ENCODE measurements at regions of chr15 and their contacts with region 1.

Region 1: GRCh38 chr15:43133430-43134156 is at the start of gene TMEM62:
- DNase-seq: peak; percentile 75
- ATAC-seq: peak; percentile 97
- H3K4me3 ChIP-seq: peak within 1 kb of the TSS; percentile 88
- H3K27ac ChIP-seq: peak within 1 kb of the TSS; percentile 84
- H3K4me1 ChIP-seq: no peaks in the 10 kb centered on the region
- H3K27me3 ChIP-seq: no peaks in the 10 kb centered on the region
- CTCF ChIP-seq: no peak
- EP300 ChIP-seq: no peak; a peak in 1 of 4 replicates
- POLR2A ChIP-seq: peak; percentile 99
- RAD21 ChIP-seq: 0 out of 2 replicates have a peak, but pooled peaks have one; percentile 0
- polyA plus RNA-seq, gene TMEM62: 7.0 to 9.7 TPM

Region 2: GRCh38 chr15:42670451-42670850 is 463.1 kb before region 1 on chr15:
- CTCF ChIA-PET with region 1: no interaction called
- POLR2A ChIA-PET with region 1: no interaction called
- RAD21 ChIA-PET with region 1: no interaction called
- SMC1A ChIA-PET with region 1: no interaction called
- in situ Hi-C with region 1: no loop called
- intact Hi-C with region 1: no loop called
- DNase-seq: no peak
- ATAC-seq: no peak
- H3K4me3 ChIP-seq: no peak overlapping the region
- H3K27ac ChIP-seq: no peak overlapping the region
- H3K4me1 ChIP-seq: no peaks in the 10 kb centered on the region
- H3K27me3 ChIP-seq: no peaks in the 10 kb centered on the region
- CTCF ChIP-seq: no peak
- EP300 ChIP-seq: no peak
- POLR2A ChIP-seq: no peak
- RAD21 ChIP-seq: no peak

Region 3: GRCh38 chr15:42879443-42879842 is 254.2 kb before region 1 on chr15:
- CTCF ChIA-PET with region 1: no interaction called
- POLR2A ChIA-PET with region 1: no interaction called
- RAD21 ChIA-PET with region 1: no interaction called
- SMC1A ChIA-PET with region 1: no interaction called
- in situ Hi-C with region 1: no loop called
- intact Hi-C with region 1: no loop called
- DNase-seq: no peak
- ATAC-seq: no peak
- H3K4me3 ChIP-seq: no peak overlapping the region
- H3K27ac ChIP-seq: no peak overlapping the region
- H3K4me1 ChIP-seq: no peaks in the 10 kb centered on the region
- H3K27me3 ChIP-seq: no peaks in the 10 kb centered on the region
- CTCF ChIP-seq: no peak
- EP300 ChIP-seq: no peak
- POLR2A ChIP-seq: no peak
- RAD21 ChIP-seq: no peak

Region 4: GRCh38 chr15:43185157-43186017 is 51.8 kb after region 1 on chr15 and contains the start of gene CCNDBP1:
- CTCF ChIA-PET with region 1: no interaction called
- POLR2A ChIA-PET with region 1: interaction called, 3 read pairs
- RAD21 ChIA-PET with region 1: no interaction called
- SMC1A ChIA-PET with region 1: no interaction called
- in situ Hi-C with region 1: no loop called
- intact Hi-C with region 1: loop called (anchors 5 kb)
- DNase-seq: peak; percentile 87
- ATAC-seq: peak; percentile 98
- H3K4me3 ChIP-seq: peak within 1 kb of the TSS; percentile 100
- H3K27ac ChIP-seq: peak within 1 kb of the TSS; percentile 80
- H3K4me1 ChIP-seq: no peaks in the 10 kb centered on the region
- H3K27me3 ChIP-seq: no peaks in the 10 kb centered on the region
- CTCF ChIP-seq: peak; percentile 28 to 32 (median 28); a peak in 5 of 6 replicates
- EP300 ChIP-seq: no peak
- POLR2A ChIP-seq: peak; percentile 98
- RAD21 ChIP-seq: no peak
- polyA plus RNA-seq, gene CCNDBP1: 30.1 to 39.2 TPM

Region 5: DNA sequence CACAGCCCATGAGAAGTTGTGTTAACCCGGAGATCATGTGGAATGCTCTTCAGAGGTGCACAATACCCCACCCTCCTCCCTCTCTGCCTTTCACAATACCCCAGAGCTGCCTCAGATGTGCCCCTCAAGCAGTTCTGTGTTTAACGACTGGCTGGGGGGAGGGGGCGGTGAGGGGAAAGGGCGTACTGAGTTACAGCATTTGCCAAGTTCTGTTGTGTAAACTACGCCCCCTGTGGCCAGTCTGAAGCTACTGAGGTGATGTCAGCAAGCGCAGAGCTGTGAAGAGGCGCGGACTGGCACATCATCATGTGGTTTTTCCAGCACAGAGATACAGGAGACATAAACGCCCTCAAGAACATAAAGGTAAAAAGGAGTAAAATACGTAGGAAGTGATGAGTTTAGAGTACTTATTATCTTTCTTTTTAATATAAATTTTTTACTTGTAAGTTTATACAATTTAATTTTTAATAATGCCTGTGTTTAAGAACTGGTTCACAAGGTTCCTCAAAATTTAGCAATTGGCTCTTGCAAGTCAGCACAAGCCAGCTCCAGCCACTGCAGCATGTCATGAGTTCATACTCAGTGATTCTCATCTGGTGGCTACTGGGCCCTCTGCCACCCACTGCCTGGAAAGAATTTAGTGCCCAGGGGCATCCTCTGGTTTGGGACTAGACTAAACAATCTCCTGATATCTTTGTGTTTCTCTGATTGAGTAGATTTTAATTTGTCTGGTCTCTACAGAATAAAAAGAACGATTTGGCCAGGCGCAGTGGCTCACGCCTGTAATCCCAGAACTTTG is 85.5 kb after region 1 on chr15:
- CTCF ChIA-PET with region 1: no interaction called
- POLR2A ChIA-PET with region 1: no interaction called
- RAD21 ChIA-PET with region 1: no interaction called
- SMC1A ChIA-PET with region 1: no interaction called
- in situ Hi-C with region 1: no loop called
- intact Hi-C with region 1: no loop called
- DNase-seq: no peak
- ATAC-seq: no peak
- H3K4me3 ChIP-seq: no peak overlapping the region
- H3K27ac ChIP-seq: no peak overlapping the region
- H3K4me1 ChIP-seq: no peaks in the 10 kb centered on the region
- H3K27me3 ChIP-seq: no peaks in the 10 kb centered on the region
- CTCF ChIP-seq: peak in 2 of 3 experiments; percentile 1 to 20; a peak in 1 of 6 replicates
- EP300 ChIP-seq: no peak
- POLR2A ChIP-seq: no peak
- RAD21 ChIP-seq: no peak

Region 6: DNA sequence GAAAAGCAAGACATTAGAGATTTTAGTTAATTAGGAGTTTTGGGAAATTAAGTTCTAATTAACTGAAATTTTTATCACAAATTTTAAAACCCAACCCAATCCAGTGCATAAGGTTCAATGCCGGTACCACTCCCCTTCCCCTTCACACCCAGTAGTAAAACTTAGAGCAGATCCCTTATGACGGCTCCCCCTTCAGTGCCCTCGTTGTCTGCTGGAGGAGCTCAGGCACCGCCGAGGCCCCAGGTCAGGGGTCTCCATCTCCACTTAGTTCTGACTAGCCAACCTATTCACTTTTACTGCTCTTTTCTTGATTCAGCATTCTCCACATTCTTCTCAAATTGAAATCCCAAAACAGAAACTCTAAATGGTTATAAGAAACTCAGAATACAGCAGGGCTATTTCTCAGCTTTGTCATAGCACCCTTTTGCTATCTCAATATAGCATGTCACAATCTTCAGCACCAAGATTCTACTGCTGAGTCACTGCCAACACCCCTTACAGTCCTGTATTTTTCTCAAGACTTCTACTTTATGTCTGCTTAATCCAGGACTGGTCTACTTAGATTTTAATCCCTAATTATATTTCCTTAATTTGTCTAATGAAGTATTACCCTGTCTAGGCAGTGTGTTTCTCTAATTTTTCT is 277.1 kb after region 1 on chr15:
- CTCF ChIA-PET with region 1: no interaction called
- POLR2A ChIA-PET with region 1: no interaction called
- RAD21 ChIA-PET with region 1: no interaction called
- SMC1A ChIA-PET with region 1: no interaction called
- in situ Hi-C with region 1: no loop called
- intact Hi-C with region 1: no loop called
- DNase-seq: no peak
- ATAC-seq: no peak
- H3K4me3 ChIP-seq: no peak overlapping the region
- H3K27ac ChIP-seq: no peak overlapping the region
- H3K4me1 ChIP-seq: no peaks in the 10 kb centered on the region
- H3K27me3 ChIP-seq: no peaks in the 10 kb centered on the region
- CTCF ChIP-seq: no peak
- EP300 ChIP-seq: no peak
- POLR2A ChIP-seq: no peak
- RAD21 ChIP-seq: no peak

Measured in GM12878 (cell line).